Right lobe of liver (tissue), 6 donors: ENCODE measurements at regions of chr1 and their contacts with region 1.

Region 1: DNA sequence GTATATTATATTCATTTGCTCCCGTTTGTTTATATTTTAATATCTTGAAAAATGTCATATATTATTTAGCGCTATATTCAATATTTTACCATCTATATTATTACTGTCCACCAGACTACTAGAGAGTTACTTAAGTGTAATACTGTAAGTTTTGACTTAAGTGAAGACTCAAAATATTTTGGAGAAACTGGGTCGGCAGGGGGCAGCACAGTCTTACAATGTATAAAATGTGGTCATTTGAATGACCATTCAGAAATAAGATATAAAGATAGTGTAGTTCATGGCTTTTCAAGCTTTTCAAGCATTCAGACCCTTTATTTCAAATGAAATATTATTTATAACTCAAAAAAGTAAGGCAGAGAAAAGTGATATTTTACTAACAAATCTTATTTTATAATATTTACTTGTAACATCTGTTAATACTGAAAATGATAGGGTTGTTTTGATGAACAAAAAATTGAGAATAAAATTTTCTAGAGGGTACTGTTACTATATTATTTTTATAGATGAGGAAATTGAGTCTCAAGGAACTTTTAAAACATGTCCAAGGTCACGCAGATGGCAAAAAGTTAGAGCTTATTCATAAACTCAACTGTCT is 89.0 kb upstream of the SERTAD4 start:
- DNase-seq: peak; percentile 58 to 67 (median 66)
- ATAC-seq: peak; percentile 61 to 67 (median 65)
- H3K4me3 ChIP-seq: no peak overlapping the region
- H3K27ac ChIP-seq: no peak overlapping the region
- H3K4me1 ChIP-seq: no peaks in the 10 kb centered on the region
- H3K27me3 ChIP-seq: no peaks in the 10 kb centered on the region
- CTCF ChIP-seq: peak; percentile 58 to 69 (median 64)
- POLR2A ChIP-seq: no peak

Region 2: GRCh38 chr1:210311726-210312493 is 168.3 kb after region 1 on chr1:
- intact Hi-C with region 1: loop called in 1 of 2 experiments (anchors 5 kb)
- DNase-seq: no peak
- ATAC-seq: peak in 1 of 4 donors; percentile 10
- H3K4me3 ChIP-seq: no peak overlapping the region
- H3K27ac ChIP-seq: no peak overlapping the region
- H3K4me1 ChIP-seq: no peaks in the 10 kb centered on the region
- H3K27me3 ChIP-seq: no peaks in the 10 kb centered on the region
- CTCF ChIP-seq: no peak
- POLR2A ChIP-seq: no peak